ENCODE measurements at regions of chr5 and their contacts with region 1.

Region 1: GRCh38 chr5:96336351-96336985 is 96.6 kb downstream of the PCSK1 start:
- DNase-seq: peak; percentile 31
- CTCF ChIP-seq: peak; percentile 76

Region 2: DNA sequence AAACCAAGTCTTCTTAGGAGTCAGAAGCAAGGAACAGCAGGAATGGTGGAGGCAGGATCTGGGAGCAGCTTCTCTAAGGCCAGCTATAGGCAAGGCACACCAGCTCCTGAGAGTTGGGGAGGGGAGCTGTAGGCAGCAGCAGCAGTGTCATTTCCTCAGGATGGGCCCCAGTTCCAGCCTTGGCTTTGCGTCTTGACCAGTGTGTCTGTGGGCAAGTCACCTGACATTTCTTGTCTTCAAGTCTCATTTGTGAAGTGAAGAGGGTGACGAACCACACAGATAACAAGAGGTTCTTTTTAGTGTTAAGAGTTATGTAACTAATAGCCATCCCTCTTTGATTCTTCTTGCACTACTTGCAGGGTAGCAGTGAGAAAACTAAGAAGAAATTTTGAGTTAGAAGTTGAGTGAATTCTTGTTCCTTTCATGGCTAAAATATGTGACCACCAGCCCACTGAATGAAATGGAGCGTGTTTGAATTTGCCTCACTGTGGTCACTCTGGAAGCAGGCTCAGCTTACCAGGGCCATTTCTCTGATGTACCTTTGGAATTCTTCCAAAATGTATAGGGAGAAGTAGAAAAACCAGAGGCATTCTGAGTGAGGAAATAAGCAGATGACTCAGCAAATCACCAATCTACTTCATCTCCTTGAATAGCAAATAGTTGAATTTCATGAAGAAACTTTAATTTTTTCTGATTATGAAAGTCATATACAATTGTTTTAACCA is 563.0 kb before region 1 on chr5:
- in situ Hi-C with region 1: loop called (anchors 10 kb)
- DNase-seq: no peak
- CTCF ChIP-seq: no peak

Region 3: DNA sequence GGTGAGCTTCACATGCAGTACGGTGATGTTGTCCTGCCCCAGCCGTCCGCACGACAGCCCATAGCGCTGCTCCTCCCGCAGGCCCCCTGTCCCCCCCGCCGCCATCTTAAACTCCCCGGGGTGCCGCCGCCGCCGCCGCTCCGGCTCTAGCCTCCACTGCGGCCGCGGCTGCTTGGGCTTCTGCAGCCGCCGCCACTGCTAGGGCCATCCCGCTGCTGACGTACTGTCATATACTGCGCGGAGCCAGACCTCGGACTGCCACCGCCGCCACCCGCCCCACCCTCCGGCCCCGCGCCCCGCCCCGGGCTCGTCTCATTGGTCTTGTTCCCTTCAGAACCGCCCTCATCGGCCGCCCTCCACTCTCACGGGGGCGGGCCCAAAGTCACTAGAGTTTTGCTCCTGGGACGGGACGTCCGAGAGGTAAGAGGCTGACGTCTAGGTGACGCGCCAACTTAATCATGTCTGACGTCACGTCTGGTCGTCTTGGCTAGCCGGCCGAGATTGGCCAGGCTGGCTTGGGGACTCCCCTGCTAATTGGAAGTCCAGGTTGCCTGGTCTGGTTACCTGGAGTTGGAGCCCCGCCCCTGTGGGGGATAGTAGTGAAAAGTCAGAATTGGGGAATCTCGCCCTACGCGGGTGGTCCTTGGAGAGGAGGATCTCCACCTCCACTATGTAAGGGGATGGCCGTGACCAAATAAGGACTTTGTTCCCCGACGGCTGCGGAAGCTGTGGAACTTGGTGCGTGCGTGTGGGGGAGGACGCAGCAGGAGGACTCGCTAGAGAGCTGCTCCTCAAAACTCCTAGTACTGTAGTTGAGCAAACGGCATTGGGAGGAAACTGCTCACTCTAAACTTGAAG is 374.6 kb before region 1 on chr5 and contains the start of gene ELL2:
- in situ Hi-C with region 1: loop called (anchors 25 kb)
- DNase-seq: peak; percentile 96
- CTCF ChIP-seq: no peak

Region 4: GRCh38 chr5:96096724-96097123 is 239.7 kb before region 1 on chr5:
- in situ Hi-C with region 1: no loop called
- DNase-seq: no peak
- CTCF ChIP-seq: no peak

Region 5: DNA sequence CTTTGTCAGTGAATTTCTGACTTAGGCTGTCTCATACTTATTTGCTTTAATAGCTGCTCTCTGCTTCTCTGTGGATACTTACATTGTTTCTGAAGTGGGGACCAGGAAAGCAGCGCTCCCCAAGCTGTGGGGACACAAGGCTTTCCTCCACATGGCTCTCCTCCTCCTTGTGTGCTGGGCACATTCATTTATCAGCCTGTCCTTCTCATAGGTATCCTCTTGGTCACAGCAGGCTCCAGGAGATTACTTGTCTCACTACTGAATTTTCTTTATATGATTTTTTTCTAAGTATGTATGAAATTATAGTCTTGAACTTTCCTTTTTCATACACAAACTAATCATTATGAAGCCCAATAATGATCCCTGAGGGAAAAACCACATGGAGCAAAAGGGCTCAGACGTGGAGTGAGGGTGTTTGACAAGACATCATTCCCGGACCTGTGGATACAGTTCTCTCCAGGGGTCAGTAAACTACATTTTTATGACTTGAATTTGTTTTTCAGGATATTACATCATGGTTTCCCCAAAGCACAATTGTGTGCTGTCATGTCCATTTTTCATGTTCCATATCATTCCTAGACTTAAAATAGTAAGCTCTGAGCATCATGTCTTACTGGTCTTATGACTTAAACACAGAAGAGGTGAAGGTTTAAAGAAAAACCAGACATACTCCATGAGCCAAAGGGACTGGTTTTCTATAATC is 138.0 kb before region 1 on chr5:
- in situ Hi-C with region 1: no loop called
- DNase-seq: no peak
- CTCF ChIP-seq: no peak